Right ventricle myocardium inferior (tissue), 1 donor: ENCODE measurements at regions of chr3 and their contacts with region 1.

Region 1: DNA sequence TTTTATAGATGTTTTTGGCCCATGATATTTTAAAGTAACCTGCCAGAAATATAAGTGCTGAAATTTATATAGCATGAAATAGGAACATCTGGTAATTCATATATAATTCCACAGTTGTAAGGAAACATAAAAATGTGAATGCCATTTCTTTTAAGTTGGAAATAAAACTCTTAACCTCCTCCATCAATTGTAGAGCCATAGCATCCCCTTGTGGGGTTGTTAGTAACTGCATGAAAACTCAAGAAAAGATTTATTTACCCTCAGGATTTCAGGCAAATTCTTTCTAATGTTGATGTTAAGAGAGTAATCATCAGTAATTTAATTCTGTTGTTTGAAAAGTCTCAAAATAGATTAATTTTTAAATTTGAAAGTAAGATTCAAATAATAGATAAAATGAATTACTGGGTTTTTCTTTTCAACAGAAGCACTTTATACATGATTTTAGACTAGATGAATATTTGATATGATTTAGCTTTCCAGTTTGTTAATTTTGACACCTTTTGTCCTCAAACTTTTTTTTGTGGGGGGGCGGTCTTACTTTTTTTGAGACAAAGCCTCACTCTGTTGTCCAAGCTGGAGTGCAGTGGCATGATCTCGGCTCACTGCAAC is 74.7 kb downstream of the RASA2 start:
- DNase-seq: no peak
- ATAC-seq: no peak

Region 2: GRCh38 chr3:141243271-141243707 is 318.2 kb before region 1 on chr3:
- intact Hi-C with region 1: no loop called
- DNase-seq: no peak
- ATAC-seq: no peak

Region 3: DNA sequence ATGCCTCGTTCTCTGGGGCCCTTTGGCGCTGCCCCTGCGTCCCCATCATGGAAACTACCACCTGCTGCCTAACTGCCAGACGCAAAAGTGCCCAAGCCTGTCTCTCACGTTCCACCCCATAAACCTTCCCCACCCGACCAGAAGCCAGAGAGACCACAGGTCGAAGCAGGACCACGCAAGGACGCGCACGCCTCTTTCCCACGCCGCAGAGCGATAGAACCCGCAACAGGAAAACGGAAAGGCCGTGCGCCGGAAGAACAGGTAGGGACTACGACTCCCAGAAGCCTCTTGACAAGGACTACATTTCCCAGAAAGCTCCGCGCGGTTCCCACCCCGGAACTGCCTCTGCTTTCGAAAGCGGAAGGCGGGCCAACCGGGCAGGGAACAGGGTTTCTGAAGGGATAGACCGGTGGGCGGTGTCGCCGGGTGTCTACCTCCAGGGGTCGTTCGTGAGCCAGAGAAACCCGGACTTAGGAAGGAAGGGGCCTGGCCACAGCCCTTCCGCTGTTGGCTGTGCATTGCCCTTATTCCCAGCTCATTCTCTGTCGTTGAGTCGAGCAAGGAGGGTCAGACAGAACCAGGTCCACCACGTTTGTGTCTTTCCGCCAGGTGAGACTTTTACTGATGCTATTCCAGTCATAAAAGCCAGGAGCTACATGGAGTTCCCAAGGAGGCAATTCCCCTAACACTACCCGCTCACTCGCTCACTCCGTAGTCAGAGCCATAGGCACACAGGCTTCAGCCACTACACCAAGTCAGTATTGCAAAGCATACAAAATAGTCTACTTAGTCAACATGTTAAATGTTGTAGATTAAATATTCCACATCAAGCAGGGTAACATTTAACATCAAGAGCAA is 249.8 kb before region 1 on chr3:
- intact Hi-C with region 1: loop called (anchors 5 kb)
- DNase-seq: peak; percentile 99
- ATAC-seq: peak; percentile 98

Region 4: DNA sequence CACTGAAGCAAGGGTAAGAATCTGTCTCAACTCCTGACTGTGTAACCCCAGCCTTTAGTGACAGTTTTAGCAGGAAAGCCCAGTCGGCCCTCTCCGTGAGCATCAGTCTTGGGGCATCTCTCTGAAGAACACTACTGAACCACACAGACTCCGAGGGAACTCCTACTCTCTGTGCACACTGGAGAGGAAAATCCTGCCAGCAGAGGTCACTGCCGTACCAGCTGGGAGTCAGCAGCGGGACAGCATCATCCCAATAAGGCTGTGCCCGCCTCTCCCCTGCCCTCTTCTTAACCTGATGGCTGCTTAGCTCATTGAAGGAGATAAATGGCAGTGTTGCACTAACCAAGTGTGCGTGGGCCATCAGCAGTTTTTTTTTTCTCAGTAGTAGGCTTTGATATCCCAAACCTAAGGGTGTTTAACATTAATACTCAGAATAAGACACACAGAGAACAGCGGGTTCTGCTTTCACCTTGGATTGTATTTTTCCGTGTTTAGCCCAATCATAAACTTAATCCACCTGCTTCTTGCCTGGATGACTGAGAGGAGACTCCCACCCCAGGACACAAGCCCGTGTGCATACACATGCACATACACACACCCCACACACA is 101.3 kb before region 1 on chr3:
- intact Hi-C with region 1: loop called (anchors 2 kb)
- DNase-seq: peak; percentile 92
- ATAC-seq: peak; percentile 95

Region 5: GRCh38 chr3:141625506-141625905 is 64.0 kb after region 1 on chr3:
- intact Hi-C with region 1: no loop called
- DNase-seq: no peak
- ATAC-seq: no peak